Activated CD8-positive, alpha-beta T cell treated with anti-CD3 and anti-CD28 coated beads for 36 hours (primary cell): ENCODE measurements at regions of chr4 and their contacts with region 1.

Region 1: GRCh38 chr4:1693129-1693896 is 9.2 kb upstream of the FAM53A start:
- DNase-seq: peak; percentile 80
- ATAC-seq: peak; percentile 96
- H3K4me3 Mint-ChIP-seq: no peak overlapping the region
- H3K27ac Mint-ChIP-seq: peak overlapping the region; percentile 70
- H3K4me1 Mint-ChIP-seq: peaks cover 3% of the 10 kb centered on the region
- H3K27me3 Mint-ChIP-seq: no peaks in the 10 kb centered on the region
- CTCF ChIP-seq: peak; percentile 86

Region 2: DNA sequence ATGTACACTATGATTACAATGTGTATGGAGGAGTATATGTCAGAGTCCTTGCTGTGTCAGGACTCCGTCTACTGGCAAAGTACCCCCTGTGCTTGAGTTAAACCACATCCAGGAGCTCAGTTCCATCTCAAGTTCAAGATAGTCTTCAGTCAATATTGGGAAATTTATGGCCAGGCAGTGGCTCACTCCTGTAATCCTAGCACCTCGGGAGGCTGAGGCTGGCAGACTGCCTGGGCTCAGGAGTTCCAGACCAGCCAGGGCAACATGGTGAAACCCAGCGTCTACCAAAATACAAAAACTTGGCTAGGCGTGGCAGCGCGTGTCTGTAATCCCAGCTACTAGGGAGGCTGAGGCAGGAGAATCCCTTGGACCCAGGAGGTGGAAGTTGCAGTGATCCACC is 13.0 kb after region 1 on chr4:
- CTCF ChIA-PET with region 1: interaction called, 177 read pairs
- POLR2A ChIA-PET with region 1: interaction called, 76 read pairs
- intact Hi-C with region 1: no loop called
- DNase-seq: no peak
- ATAC-seq: no peak
- H3K4me3 Mint-ChIP-seq: no peak overlapping the region
- H3K27ac Mint-ChIP-seq: no peak overlapping the region
- H3K4me1 Mint-ChIP-seq: peaks cover 61% of the 10 kb centered on the region
- H3K27me3 Mint-ChIP-seq: no peaks in the 10 kb centered on the region
- CTCF ChIP-seq: no peak

Region 3: GRCh38 chr4:1721004-1721665 is 27.8 kb after region 1 on chr4 and contains the starts of genes TACC3 and TMEM129:
- CTCF ChIA-PET with region 1: interaction called, 257 read pairs
- POLR2A ChIA-PET with region 1: interaction called, 31 read pairs
- intact Hi-C with region 1: loop called (anchors 2 kb)
- DNase-seq: peak; percentile 96
- ATAC-seq: peak; percentile 81
- H3K4me3 Mint-ChIP-seq: peak within 1 kb of the TSS; percentile 97
- H3K27ac Mint-ChIP-seq: peak within 1 kb of the TSS; percentile 99
- H3K4me1 Mint-ChIP-seq: peaks cover 40% of the 10 kb centered on the region
- H3K27me3 Mint-ChIP-seq: no peaks in the 10 kb centered on the region
- CTCF ChIP-seq: no peak
- total RNA-seq, gene TACC3: 190 to 200 TPM
- total RNA-seq, gene TMEM129: 17.8 to 18.2 TPM

Region 4: DNA sequence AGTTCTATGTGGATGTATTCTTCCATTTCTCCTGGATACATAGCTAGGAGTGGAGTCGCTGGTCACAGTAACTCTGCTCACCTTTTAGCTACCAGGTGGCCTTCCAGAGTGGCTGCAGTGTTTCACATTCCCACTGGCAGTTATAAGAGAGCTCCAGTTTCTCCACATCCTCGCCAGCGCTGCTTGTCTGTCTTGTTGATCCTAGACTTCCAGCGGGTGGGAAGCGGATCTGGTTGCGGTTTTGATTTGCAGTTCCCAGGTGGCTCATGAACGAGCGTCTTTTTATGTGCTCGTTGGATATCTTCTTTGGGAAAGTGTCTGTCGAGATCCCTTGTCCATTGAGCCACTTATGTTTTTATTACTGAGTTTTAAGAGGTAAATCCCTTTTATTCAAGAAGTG is 39.6 kb after region 1 on chr4:
- CTCF ChIA-PET with region 1: interaction called, 257 read pairs
- POLR2A ChIA-PET with region 1: interaction called, 6 read pairs
- intact Hi-C with region 1: no loop called
- DNase-seq: no peak
- ATAC-seq: no peak
- H3K4me3 Mint-ChIP-seq: no peak overlapping the region
- H3K27ac Mint-ChIP-seq: no peak overlapping the region
- H3K4me1 Mint-ChIP-seq: peaks cover 20% of the 10 kb centered on the region
- H3K27me3 Mint-ChIP-seq: no peaks in the 10 kb centered on the region
- CTCF ChIP-seq: no peak

Region 5: DNA sequence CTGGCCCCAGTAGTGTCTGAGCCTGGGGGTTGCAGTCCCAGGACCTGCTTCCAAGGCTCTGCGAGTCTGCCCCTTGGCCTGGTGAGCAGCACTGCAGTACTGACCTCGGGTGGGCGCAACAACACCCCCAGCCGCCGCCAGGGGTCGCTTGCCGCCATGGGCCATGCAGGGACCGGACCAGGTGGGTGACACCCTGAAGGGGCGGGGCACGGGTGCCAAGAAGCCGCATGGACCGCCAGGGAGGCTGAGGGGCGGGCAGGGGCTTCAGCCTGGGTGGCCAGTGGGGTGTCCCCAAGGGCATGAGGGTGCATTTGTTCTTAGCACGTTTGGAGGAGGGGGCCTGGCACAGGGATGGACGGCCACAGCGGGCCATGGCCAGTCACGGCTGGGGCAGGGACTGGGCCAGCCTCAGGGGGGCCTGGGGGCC is 53.0 kb after region 1 on chr4:
- CTCF ChIA-PET with region 1: interaction called, 13 read pairs
- POLR2A ChIA-PET with region 1: no interaction called
- intact Hi-C with region 1: no loop called
- DNase-seq: peak; percentile 92
- ATAC-seq: peak; percentile 78
- H3K4me3 Mint-ChIP-seq: no peak overlapping the region
- H3K27ac Mint-ChIP-seq: no peak overlapping the region
- H3K4me1 Mint-ChIP-seq: no peaks in the 10 kb centered on the region
- H3K27me3 Mint-ChIP-seq: peaks cover 4% of the 10 kb centered on the region
- CTCF ChIP-seq: peak; percentile 84

Region 6: DNA sequence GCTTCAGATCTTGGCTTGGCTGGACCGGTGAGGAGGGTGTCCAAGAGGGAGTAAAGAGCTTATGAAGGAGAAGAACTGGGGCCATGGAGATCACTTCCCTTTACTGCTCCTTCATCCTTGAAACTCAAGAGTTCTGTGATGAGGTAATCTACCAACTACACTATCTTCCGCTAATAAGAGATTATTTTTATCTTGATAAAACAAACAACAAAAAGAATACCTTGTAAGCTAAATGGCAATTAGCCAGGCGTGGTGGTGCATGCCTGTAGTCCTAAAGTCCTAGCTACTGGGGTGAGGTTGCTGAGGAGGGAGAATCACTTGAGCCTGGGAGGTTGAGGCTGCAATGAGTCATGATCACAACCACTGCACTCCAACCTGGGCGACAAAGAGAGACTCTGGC is 501.2 kb after region 1 on chr4:
- CTCF ChIA-PET with region 1: no interaction called
- POLR2A ChIA-PET with region 1: no interaction called
- intact Hi-C with region 1: no loop called
- DNase-seq: no peak
- ATAC-seq: no peak
- H3K4me3 Mint-ChIP-seq: no peak overlapping the region
- H3K27ac Mint-ChIP-seq: no peak overlapping the region
- H3K4me1 Mint-ChIP-seq: no peaks in the 10 kb centered on the region
- H3K27me3 Mint-ChIP-seq: no peaks in the 10 kb centered on the region
- CTCF ChIP-seq: no peak